Sigmoid colon (tissue), 7 donors: ENCODE measurements at regions of chr3 and their contacts with region 1.

Region 1: GRCh38 chr3:101849051-101849720 is at the start of gene NFKBIZ:
- DNase-seq: peak; percentile 98
- H3K4me3 ChIP-seq: peak within 1 kb of the TSS; percentile 69 to 95 (median 92)
- H3K27ac ChIP-seq: peak within 1 kb of the TSS; percentile 94 to 99 (median 98)
- H3K4me1 ChIP-seq: peaks cover 0 to 40% (median 27%) of the 10 kb centered on the region in 4 donors
- H3K27me3 ChIP-seq: no peaks in the 10 kb centered on the region
- CTCF ChIP-seq: no peak
- EP300 ChIP-seq: peak in 2 of 4 donors; percentile 50 to 66
- POLR2A ChIP-seq: peak; percentile 8 to 66
- total RNA-seq, gene NFKBIZ: 49.9 to 121 (median 58.1) TPM

Region 2: GRCh38 chr3:101676765-101677435 is 172.3 kb before region 1 on chr3 and contains the start of gene ZBTB11:
- intact Hi-C with region 1: loop called (anchors 5 kb)
- DNase-seq: peak; percentile 100
- H3K4me3 ChIP-seq: peak within 1 kb of the TSS; percentile 86 to 98 (median 93)
- H3K27ac ChIP-seq: peak within 1 kb of the TSS; percentile 96 to 99 (median 98)
- H3K4me1 ChIP-seq: peaks cover 0 to 30% (median 17%) of the 10 kb centered on the region in 4 donors
- H3K27me3 ChIP-seq: no peaks in the 10 kb centered on the region
- CTCF ChIP-seq: peak in 2 of 4 experiments; percentile 26 to 42
- EP300 ChIP-seq: peak in 2 of 4 donors; percentile 37 to 47
- POLR2A ChIP-seq: peak; percentile 90 to 91
- total RNA-seq, gene ZBTB11: 18.6 to 24.4 (median 21.5) TPM

Region 3: GRCh38 chr3:101827211-101828174 is 21.7 kb before region 1 on chr3:
- intact Hi-C with region 1: loop called (anchors 2 kb)
- DNase-seq: peak; percentile 90
- H3K4me3 ChIP-seq: peak overlapping the region; percentile 44 to 63 (median 58)
- H3K27ac ChIP-seq: peak overlapping the region; percentile 85 to 93 (median 92)
- H3K4me1 ChIP-seq: peaks cover 0 to 39% (median 34%) of the 10 kb centered on the region in 4 donors
- H3K27me3 ChIP-seq: no peaks in the 10 kb centered on the region
- CTCF ChIP-seq: no peak
- EP300 ChIP-seq: no peak
- POLR2A ChIP-seq: peak; percentile 48 to 49

Region 4: GRCh38 chr3:102089904-102090492 is 240.8 kb after region 1 on chr3:
- intact Hi-C with region 1: loop called (anchors 5 kb)
- DNase-seq: no peak
- H3K4me3 ChIP-seq: no peak overlapping the region
- H3K27ac ChIP-seq: peak overlapping the region in 3 of 4 donors; percentile 56 to 81 (median 64)
- H3K4me1 ChIP-seq: peaks cover 0 to 52% (median 40%) of the 10 kb centered on the region in 4 donors
- H3K27me3 ChIP-seq: no peaks in the 10 kb centered on the region
- CTCF ChIP-seq: no peak
- EP300 ChIP-seq: peak; percentile 89 to 98 (median 96)
- POLR2A ChIP-seq: no peak

Region 5: GRCh38 chr3:102180291-102181039 is 331.3 kb after region 1 on chr3:
- intact Hi-C with region 1: no loop called
- DNase-seq: no peak
- H3K4me3 ChIP-seq: no peak overlapping the region
- H3K27ac ChIP-seq: peak overlapping the region; percentile 46 to 69 (median 64)
- H3K4me1 ChIP-seq: peaks cover 0 to 39% (median 36%) of the 10 kb centered on the region in 4 donors
- H3K27me3 ChIP-seq: no peaks in the 10 kb centered on the region
- CTCF ChIP-seq: no peak
- EP300 ChIP-seq: no peak
- POLR2A ChIP-seq: no peak

Region 6: GRCh38 chr3:102229062-102229655 is 380.0 kb after region 1 on chr3:
- intact Hi-C with region 1: loop called (anchors 5 kb)
- DNase-seq: peak; percentile 79
- H3K4me3 ChIP-seq: no peak overlapping the region
- H3K27ac ChIP-seq: no peak overlapping the region
- H3K4me1 ChIP-seq: peaks cover 0 to 10% (median 0%) of the 10 kb centered on the region in 4 donors
- H3K27me3 ChIP-seq: no peaks in the 10 kb centered on the region
- CTCF ChIP-seq: peak; percentile 83 to 93 (median 90)
- EP300 ChIP-seq: no peak
- POLR2A ChIP-seq: no peak